H1 (cell line): ENCODE measurements at regions of chr20 and their contacts with region 1.

Region 1: GRCh38 chr20:53915446-53916172 is 154.8 kb downstream of the BCAS1 start:
- DNase-seq: peak; percentile 59 to 97
- H3K4me3 ChIP-seq: peak overlapping the region; percentile 40 to 82 (median 68)
- H3K27ac ChIP-seq: peak overlapping the region; percentile 57; the same call in 1 of the 2 replicates
- H3K4me1 ChIP-seq: peaks cover 8 to 21% (median 17%) of the 10 kb centered on the region in 4 experiments; a peak in 6 of 7 replicates
- H3K27me3 ChIP-seq: no peaks in the 10 kb centered on the region
- CTCF ChIP-seq: peak; percentile 72 to 80 (median 72)
- EP300 ChIP-seq: no peak
- POLR2A ChIP-seq: no peak
- RAD21 ChIP-seq: peak; percentile 78 to 80

Region 2: DNA sequence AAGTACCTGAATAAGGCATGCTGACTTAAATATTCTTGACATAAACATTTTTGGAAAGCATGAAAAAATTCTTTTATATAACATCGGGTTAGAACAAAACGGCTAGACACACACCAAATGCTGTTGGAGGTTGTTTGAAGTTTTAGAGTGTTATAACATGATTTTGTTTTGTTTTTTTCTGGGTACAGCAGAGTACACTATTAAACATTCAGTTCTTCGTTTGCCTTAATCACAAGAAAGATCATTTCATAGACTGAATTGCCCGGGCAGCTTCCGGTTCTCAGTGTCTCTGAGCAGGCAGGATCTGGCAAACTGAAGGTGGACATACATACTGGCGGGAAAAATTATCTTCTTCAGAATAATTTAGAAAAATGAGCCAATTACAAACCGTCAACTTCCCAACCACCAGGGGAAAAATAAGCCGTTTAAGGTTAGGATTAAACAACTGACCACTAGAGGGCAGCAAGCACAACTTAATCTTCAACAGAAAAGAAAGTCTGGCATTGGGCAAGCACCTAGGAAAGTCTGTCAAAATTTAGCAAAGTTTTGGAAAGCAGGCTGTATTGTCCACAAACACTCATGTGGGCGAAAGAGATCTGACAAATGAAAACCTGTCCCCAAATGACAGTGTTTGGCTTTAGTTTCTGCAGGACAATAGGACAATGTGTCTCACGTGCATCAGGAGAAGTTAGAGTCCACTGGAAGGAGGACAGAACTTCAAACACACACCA is 337.0 kb before region 1 on chr20:
- CTCF ChIA-PET with region 1: interaction called, 14 read pairs
- POLR2A ChIA-PET with region 1: no interaction called
- DNase-seq: no peak
- H3K4me3 ChIP-seq: no peak overlapping the region
- H3K27ac ChIP-seq: no peak overlapping the region
- H3K4me1 ChIP-seq: peaks cover 1 to 13% (median 9%) of the 10 kb centered on the region in 4 experiments; a peak in 4 of 7 replicates
- H3K27me3 ChIP-seq: no peaks in the 10 kb centered on the region
- CTCF ChIP-seq: peak in 2 of 3 experiments; percentile 74 to 98; a peak in 3 of 4 replicates
- EP300 ChIP-seq: no peak
- POLR2A ChIP-seq: no peak
- RAD21 ChIP-seq: peak; percentile 86 to 91

Region 3: DNA sequence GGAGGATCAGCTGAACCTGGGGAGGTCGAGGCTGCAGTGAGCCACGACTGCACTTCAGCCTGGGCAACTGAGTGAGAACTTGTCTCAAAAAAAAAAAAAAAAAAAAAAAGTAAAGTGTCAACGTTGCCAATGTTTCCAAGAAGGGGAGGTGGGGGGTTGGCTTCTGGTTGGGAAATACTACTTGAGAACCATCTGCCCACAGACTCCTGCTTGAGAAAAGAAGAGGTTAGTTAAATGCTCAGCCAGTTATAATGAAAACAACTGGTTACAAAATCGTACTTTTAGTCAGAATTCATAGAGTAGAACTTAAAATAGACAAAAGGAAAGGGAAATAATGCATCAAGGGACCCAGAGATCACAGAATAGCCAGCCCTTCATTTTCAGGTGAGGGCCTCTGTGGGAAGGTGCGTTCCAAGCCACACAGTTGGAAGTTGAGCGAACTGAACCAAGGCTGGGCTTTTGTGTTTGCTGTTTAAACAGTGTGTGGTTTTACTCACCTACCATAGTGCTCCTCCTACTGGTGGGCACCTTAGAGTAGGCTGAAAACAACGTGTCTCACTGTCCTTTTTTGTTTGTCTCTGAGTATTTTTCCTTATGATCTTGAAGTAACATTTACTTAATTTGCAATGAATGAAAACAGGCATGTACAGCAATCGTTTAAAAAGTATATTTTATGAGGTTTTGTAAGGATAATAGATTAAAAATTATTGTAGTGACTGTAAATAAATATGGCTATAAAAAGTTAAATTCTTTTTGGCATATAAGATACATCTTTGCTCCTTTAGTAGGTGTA is 45.9 kb before region 1 on chr20:
- CTCF ChIA-PET with region 1: interaction called, 42 read pairs
- POLR2A ChIA-PET with region 1: interaction called, 6 read pairs
- DNase-seq: no peak
- H3K4me3 ChIP-seq: no peak overlapping the region
- H3K27ac ChIP-seq: no peak overlapping the region
- H3K4me1 ChIP-seq: peaks cover 7 to 28% (median 16%) of the 10 kb centered on the region in 4 experiments; a peak in 6 of 7 replicates
- H3K27me3 ChIP-seq: no peaks in the 10 kb centered on the region
- CTCF ChIP-seq: peak in 2 of 3 experiments; percentile 61 to 95; a peak in 3 of 4 replicates
- EP300 ChIP-seq: no peak
- POLR2A ChIP-seq: no peak
- RAD21 ChIP-seq: peak; percentile 84 to 85

Region 4: DNA sequence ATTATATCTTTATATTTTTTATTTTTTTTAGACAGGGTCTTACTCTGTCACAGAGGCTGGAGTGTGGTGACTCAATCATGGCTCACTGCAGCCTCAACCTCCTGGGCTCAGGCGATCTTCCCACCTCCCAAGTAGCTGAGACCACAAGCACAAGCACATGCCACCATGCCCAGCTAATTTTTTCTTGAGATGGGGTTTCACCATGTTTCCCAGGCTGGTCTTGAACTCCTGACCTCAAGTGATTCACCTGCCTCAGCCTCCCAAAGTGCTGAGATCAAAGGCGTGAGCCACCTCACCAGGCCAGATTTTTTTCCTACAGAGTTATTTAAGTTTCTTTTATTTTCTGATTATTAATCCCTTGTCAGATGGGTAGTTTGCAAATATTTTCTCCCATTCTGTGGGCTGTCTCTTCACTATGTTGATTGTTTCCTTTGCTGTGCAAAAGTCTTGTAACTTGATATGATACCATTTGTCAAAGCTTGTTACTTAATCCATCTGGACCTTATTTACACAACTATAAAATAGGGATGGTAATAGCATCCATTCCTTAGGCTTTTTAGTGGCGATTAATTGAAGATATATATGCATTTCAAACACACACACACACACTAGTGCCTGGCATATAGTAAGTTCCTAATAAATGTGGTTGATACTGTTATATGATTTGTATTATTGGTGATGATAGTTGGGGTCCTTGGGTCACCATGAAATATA is 32.4 kb before region 1 on chr20:
- CTCF ChIA-PET with region 1: interaction called, 27 read pairs
- POLR2A ChIA-PET with region 1: interaction called, 10 read pairs
- DNase-seq: no peak
- H3K4me3 ChIP-seq: no peak overlapping the region
- H3K27ac ChIP-seq: no peak overlapping the region
- H3K4me1 ChIP-seq: peaks cover 3 to 16% (median 8%) of the 10 kb centered on the region in 4 experiments; a peak in 5 of 7 replicates
- H3K27me3 ChIP-seq: no peaks in the 10 kb centered on the region
- CTCF ChIP-seq: no peak
- EP300 ChIP-seq: no peak
- POLR2A ChIP-seq: no peak
- RAD21 ChIP-seq: no peak

Region 5: DNA sequence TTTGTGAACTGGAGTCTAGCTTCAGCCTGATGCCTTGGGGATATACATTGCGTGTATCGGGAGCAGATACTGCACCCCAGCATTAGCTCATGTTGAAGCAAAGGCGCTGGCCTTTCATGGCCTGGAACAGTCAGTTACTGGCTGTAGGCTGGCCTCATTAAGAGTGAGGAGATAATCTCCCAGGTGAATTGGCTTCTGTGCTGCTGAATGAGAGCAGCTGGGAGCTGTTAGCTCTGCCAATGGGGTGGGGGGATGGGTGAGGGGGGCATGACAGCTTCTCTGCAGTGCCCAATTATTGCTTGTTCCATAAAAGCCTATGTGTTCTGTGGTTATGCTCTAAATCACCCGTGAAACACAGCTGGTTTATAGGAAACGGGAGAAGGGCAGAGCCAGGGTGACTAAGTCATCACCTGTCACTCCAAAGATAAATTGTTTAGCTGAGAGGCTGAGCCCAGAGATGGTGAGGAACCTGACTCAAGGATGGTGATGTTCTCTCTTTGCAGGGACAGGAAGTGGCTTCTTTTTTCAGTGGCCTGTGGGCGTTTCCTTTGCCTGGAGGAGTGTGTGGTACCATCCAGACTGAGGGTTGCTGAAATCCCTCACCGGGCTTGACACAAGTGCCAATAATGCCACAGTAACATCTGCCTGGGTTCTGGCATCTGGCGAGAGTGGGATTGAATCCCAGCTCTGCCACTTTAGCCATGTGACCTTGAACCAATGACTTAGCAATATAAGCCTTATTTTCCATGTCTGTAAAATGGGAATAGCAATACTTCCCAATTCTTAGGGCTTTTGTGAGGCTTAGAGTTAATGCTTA is 16.1 kb before region 1 on chr20:
- CTCF ChIA-PET with region 1: interaction called, 43 read pairs
- POLR2A ChIA-PET with region 1: interaction called, 20 read pairs
- DNase-seq: no peak
- H3K4me3 ChIP-seq: no peak overlapping the region
- H3K27ac ChIP-seq: no peak overlapping the region
- H3K4me1 ChIP-seq: peaks cover 8 to 20% (median 18%) of the 10 kb centered on the region in 4 experiments
- H3K27me3 ChIP-seq: no peaks in the 10 kb centered on the region
- CTCF ChIP-seq: no peak
- EP300 ChIP-seq: no peak
- POLR2A ChIP-seq: no peak
- RAD21 ChIP-seq: no peak

Region 6: GRCh38 chr20:53933232-53933846 is 17.7 kb after region 1 on chr20:
- CTCF ChIA-PET with region 1: interaction called, 102 read pairs
- POLR2A ChIA-PET with region 1: interaction called, 5 read pairs
- DNase-seq: no peak
- H3K4me3 ChIP-seq: no peak overlapping the region
- H3K27ac ChIP-seq: no peak overlapping the region
- H3K4me1 ChIP-seq: peaks cover 0 to 6% (median 3%) of the 10 kb centered on the region in 4 experiments; a peak in 3 of 7 replicates
- H3K27me3 ChIP-seq: no peaks in the 10 kb centered on the region
- CTCF ChIP-seq: no peak
- EP300 ChIP-seq: no peak
- POLR2A ChIP-seq: no peak
- RAD21 ChIP-seq: no peak

Region 7: GRCh38 chr20:54044156-54044555 is 128.5 kb after region 1 on chr20:
- CTCF ChIA-PET with region 1: no interaction called
- POLR2A ChIA-PET with region 1: no interaction called
- DNase-seq: no peak
- H3K4me3 ChIP-seq: no peak overlapping the region
- H3K27ac ChIP-seq: no peak overlapping the region
- H3K4me1 ChIP-seq: no peaks in the 10 kb centered on the region
- H3K27me3 ChIP-seq: no peaks in the 10 kb centered on the region
- CTCF ChIP-seq: no peak
- EP300 ChIP-seq: no peak
- POLR2A ChIP-seq: no peak
- RAD21 ChIP-seq: no peak